ENCODE measurements at regions of chr4 and their contacts with region 1.

Region 1: DNA sequence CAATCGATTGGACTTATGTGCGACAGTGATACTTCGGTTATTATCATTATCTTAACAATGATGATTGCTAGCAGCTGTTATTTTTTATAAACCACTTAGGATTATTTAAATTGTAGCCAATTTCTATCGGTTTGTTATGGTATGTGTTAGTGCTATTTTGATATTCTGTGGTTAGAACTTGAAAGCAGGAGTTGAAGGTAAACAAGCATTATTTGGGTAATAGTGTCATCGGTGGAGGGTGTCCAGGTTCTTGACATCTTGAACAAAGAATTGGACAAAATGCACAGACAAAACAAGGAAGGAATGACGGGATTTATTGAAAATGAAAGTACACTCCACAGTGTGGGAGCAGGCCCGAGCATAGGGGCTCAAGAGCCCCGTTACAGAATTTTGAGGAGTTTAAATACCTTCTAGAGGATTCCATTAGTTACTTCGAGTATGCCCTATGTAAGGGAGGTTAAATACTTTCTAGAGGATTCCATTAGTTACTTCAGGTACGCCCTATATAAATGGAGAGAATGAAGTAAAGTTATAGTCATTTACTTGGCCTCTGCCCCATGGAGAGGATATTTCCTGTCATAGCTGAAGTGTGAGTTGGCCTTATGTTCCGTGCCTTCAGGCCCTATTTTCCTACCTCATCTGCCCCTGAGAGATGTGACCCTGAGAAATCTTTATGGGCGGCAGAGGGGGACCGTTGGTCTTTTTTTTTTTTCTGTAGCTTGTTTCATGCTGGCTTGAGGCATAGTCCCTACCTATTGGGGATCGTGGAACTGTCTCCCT is 13.1 kb downstream of the MOB1B start:
- DNase-seq: peak in 1 of 2 experiments; percentile 10
- H3K4me3 ChIP-seq: no peak overlapping the region
- H3K27ac ChIP-seq: no peak overlapping the region
- H3K4me1 ChIP-seq: no peaks in the 10 kb centered on the region
- H3K27me3 ChIP-seq: no peaks in the 10 kb centered on the region
- CTCF ChIP-seq: no peak

Region 2: GRCh38 chr4:70496231-70496630 is 419.0 kb before region 1 on chr4:
- CTCF ChIA-PET with region 1: no interaction called
- POLR2A ChIA-PET with region 1: no interaction called
- intact Hi-C with region 1: no loop called
- DNase-seq: no peak
- H3K4me3 ChIP-seq: no peak overlapping the region
- H3K27ac ChIP-seq: no peak overlapping the region
- H3K4me1 ChIP-seq: no peaks in the 10 kb centered on the region
- H3K27me3 ChIP-seq: no peaks in the 10 kb centered on the region
- CTCF ChIP-seq: no peak

Region 3: DNA sequence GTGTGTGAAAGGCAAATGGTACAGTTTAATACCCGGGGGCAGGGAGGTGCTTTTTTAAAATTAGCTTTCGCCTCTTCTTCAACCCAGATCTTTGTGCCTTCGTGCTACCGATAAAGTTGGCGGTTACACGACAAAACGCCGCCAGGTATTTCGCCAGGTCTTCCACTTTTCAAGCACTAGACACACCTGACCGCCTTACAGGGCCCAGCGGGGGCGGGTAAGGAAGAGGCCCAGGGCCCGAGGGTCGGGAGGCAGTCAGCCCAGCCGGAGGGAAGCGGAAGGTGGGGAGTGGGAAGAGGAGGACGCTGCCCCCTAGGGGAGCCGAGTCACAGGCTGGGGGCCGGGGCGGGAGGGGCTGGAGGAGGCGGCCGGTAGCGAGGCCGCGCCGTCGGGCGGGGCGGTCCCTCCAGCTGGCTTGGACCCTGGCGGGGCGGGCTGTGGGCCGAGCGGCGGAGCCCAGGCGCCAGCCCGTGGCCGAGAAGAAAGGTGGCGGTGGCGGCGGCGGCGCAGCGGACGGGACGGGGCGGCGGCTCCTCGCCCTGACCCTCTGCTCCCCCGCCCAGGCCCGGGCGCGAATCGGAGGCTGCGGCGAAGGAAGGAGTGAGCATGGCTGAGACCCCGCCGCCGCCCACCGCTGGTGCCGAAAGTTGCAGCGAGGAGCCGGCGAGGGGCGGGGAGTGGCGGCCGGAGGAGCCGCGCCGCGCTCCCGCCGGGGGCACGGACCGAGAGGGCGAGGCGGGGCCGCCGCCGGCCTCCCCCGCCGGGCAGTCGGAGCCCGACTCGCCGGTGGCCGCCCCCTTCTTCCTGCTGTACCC is 210.7 kb before region 1 on chr4:
- CTCF ChIA-PET with region 1: no interaction called
- POLR2A ChIA-PET with region 1: interaction called, 10 read pairs
- intact Hi-C with region 1: no loop called
- DNase-seq: peak; percentile 42 to 73
- H3K4me3 ChIP-seq: peak overlapping the region; percentile 87
- H3K27ac ChIP-seq: peak overlapping the region; percentile 72
- H3K4me1 ChIP-seq: peaks cover 24% of the 10 kb centered on the region
- H3K27me3 ChIP-seq: no peaks in the 10 kb centered on the region
- CTCF ChIP-seq: peak; percentile 44; the same call in 1 of the 2 replicates

Region 4: DNA sequence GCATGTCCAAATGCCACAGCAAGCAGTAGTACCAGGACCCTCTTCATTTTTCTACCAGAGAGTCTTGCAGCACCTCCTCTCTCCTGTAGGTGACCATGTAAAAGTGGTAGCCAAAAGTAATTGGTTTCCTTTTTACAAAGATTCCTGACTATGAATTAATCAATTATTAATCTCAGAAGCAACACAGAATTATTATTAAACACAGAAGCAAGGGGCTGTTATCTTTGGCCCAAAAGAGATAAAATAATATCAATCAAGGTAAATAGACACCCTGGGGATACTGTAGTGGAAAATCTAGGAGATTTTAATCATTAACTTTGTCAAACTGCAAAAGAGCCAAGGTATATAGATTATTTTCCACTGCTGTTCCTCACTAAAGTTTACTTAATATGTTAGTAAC is 868.7 kb after region 1 on chr4 and contains the start of gene GC:
- CTCF ChIA-PET with region 1: no interaction called
- POLR2A ChIA-PET with region 1: no interaction called
- intact Hi-C with region 1: no loop called
- DNase-seq: no peak
- H3K4me3 ChIP-seq: no peak within 1 kb of the TSS
- H3K27ac ChIP-seq: no peak within 1 kb of the TSS
- H3K4me1 ChIP-seq: no peaks in the 10 kb centered on the region
- H3K27me3 ChIP-seq: no peaks in the 10 kb centered on the region
- CTCF ChIP-seq: no peak
- total RNA-seq, gene GC: not detected in 2 replicates